ENCODE measurements at regions of chr1 and their contacts with region 1.

Region 1: GRCh38 chr1:212699104-212699624 is 476 bp downstream of the BATF3 start:
- DNase-seq: peak; percentile 43
- H3K4me3 Mint-ChIP-seq: peak overlapping the region; percentile 92
- H3K27ac Mint-ChIP-seq: peak overlapping the region; percentile 66
- H3K4me1 Mint-ChIP-seq: peaks cover 57% of the 10 kb centered on the region
- H3K27me3 Mint-ChIP-seq: peaks cover 12% of the 10 kb centered on the region

Region 2: GRCh38 chr1:212328248-212328647 is 370.9 kb before region 1 on chr1:
- intact Hi-C with region 1: no loop called
- DNase-seq: no peak
- H3K4me3 Mint-ChIP-seq: no peak overlapping the region
- H3K27ac Mint-ChIP-seq: no peak overlapping the region
- H3K4me1 Mint-ChIP-seq: peaks cover 1% of the 10 kb centered on the region
- H3K27me3 Mint-ChIP-seq: no peaks in the 10 kb centered on the region

Region 3: DNA sequence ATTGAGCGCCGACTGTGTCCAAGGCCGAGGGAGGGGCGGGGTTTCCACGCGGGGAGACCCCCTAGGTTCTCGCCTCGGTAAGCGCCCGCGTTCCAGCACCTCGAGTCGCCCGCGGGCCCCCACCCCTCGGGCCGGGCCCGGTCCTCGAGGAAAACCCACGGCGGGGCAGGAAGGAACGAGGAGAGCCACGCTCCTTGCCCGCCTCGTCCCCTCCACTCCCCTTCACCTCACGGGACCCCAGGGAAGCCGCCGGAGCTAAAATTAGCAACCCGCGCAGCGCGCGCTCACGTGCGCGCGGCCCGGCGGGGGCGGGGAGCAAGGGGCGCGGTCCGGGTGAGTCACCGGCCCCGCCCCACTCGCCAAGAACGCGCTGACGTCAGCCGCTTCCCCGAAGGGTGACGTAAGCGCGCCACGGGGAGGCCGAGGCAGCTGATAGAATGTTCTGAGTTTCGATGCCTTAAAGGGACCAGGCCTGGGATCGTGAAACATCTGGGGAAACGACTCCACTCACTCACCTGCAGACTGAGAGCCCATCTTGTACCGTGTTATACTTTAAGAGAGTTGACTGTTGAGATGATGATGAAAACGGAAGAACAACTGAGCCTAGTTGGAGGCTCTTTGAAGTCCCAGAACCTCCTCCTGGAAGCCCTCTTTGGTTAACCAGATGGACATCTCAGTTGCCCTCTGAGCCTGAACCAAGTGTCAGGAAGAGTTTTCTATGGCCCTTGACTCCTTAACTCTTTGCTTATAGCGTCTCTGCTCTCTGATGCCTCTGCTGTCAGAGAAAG is 140.3 kb before region 1 on chr1:
- intact Hi-C with region 1: loop called (anchors 2 kb)
- DNase-seq: peak; percentile 88
- H3K4me3 Mint-ChIP-seq: peak overlapping the region; percentile 61
- H3K27ac Mint-ChIP-seq: peak overlapping the region; percentile 93
- H3K4me1 Mint-ChIP-seq: peaks cover 10% of the 10 kb centered on the region
- H3K27me3 Mint-ChIP-seq: peaks cover 38% of the 10 kb centered on the region

Region 4: DNA sequence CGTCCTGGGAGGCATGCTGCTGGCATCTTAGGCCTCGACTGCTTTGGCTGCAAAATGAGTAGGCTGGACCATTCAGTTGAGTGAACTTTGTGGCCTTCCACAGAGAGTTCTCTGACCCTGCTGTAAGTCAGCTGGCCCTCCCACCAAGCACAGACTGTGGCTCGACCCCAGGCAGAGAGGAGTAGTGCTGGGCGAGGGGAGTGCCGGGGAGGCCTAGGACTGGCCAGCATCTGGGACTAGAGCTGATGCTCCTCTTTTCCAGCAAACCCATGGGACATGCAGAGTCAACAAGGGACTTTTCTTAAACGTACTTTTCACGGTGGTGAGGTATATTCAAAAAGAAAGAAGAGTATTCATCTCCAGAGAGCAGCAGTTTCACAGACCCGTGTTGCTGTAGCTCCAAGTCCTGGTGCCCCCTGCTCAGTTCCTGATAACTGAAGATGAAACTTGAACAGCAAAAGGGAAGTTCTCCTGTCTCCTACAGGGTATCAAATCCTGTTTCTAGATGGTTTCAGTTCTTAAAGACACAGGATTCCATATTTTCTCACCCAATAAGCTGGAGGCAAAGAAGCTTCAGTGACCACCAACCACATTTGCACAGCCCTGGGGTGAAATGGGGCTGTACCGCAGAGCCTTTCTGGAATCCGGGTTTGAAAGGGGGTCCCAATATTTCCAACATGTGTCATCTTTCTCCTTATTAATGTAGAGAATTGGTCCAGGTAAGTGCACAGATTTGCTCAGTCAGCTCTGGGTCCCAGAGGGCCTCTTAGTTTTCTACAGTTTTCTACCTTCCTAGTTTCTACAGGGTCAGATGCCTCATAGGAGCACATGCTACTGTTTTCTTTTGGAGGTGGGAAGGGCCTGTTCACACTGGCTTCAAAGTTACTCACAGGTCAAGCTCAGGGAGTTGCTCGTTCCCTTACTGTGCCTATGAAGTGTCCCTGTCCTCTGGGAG is 20.4 kb before region 1 on chr1:
- intact Hi-C with region 1: loop called (anchors 1 kb)
- DNase-seq: no peak
- H3K4me3 Mint-ChIP-seq: no peak overlapping the region
- H3K27ac Mint-ChIP-seq: peak overlapping the region; percentile 75
- H3K4me1 Mint-ChIP-seq: peaks cover 55% of the 10 kb centered on the region
- H3K27me3 Mint-ChIP-seq: no peaks in the 10 kb centered on the region

Region 5: DNA sequence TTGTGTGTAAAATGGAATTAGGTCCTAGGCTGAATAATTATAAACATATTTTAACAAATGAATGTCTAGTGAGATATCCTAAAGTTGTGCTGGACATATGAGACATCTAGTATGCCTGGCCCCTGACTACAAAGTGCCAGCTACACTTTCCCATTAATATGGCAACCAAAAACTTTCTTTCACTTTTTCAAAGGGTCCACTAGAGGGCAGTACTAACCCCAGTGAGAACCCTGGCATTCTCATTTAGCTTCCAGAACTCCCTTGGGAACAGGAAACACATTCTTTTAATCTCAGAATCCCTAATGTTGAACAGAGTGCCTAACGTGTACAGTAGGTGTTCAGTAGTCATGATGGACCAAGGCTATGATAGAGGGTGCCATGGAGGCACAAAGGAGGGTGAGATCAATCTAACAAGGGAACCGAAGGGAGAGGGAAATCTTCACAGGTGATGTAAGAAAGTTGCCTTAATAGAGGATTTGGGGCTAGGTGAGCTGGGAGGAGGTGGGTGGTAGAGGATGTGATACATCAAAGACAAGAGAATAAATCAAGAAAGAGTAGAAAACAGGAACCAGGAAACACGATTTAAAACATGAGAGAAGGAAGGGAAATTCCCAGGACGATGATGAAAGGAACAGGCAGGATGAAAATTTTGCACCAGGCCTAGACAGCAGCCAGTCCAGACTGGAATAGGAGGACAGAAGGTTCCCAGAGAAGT is 50.8 kb after region 1 on chr1:
- intact Hi-C with region 1: loop called (anchors 2 kb)
- DNase-seq: no peak
- H3K4me3 Mint-ChIP-seq: peak overlapping the region; percentile 8
- H3K27ac Mint-ChIP-seq: peak overlapping the region; percentile 76
- H3K4me1 Mint-ChIP-seq: peaks cover 55% of the 10 kb centered on the region
- H3K27me3 Mint-ChIP-seq: peaks cover 2% of the 10 kb centered on the region

Region 6: GRCh38 chr1:212857992-212858460 is 158.9 kb after region 1 on chr1 and contains the start of gene FLVCR1:
- intact Hi-C with region 1: loop called (anchors 1 kb)
- DNase-seq: peak; percentile 96
- H3K4me3 Mint-ChIP-seq: peak within 1 kb of the TSS; percentile 53
- H3K27ac Mint-ChIP-seq: peak within 1 kb of the TSS; percentile 98
- H3K4me1 Mint-ChIP-seq: peaks cover 15% of the 10 kb centered on the region
- H3K27me3 Mint-ChIP-seq: peaks cover 2% of the 10 kb centered on the region
- total RNA-seq, gene FLVCR1: 18.5 and 18.7 TPM in 2 replicates

Measured in activated T-helper 1 cell treated with anti-CD3 and anti-CD28 coated beads, Interleukin-12 subunit alpha, Interleukin-12 subunit beta, Interleukin-2, Interleukin-4 antibody, amounts not matched to agents 30 ng/mL and 10 ng/mL and 1 ng/mL, durations not matched to agents 14 hours and 24 hours and 36 hours (primary cell).